Common myeloid progenitor, CD34-positive (primary cell): ENCODE measurements at regions of chr19 and their contacts with region 1.

Region 1: GRCh38 chr19:12938234-12939025 is at the start of gene CALR:
- DNase-seq: peak; percentile 100
- H3K4me3 ChIP-seq: peak within 1 kb of the TSS; percentile 94 to 100 (median 98)
- H3K27ac ChIP-seq: peak within 1 kb of the TSS; percentile 98 to 99
- H3K4me1 ChIP-seq: peaks cover 27 to 81% (median 65%) of the 10 kb centered on the region in 4 experiments
- H3K27me3 ChIP-seq: no peaks in the 10 kb centered on the region

Region 2: GRCh38 chr19:12838182-12838885 is 100.1 kb before region 1 on chr19 and contains the start of gene MAST1:
- CTCF ChIA-PET with region 1: no interaction called
- POLR2A ChIA-PET with region 1: no interaction called
- DNase-seq: peak; percentile 47 to 69 (median 60)
- H3K4me3 ChIP-seq: peak within 1 kb of the TSS in 5 of 7 experiments; percentile 31 to 72 (median 57)
- H3K27ac ChIP-seq: no peak within 1 kb of the TSS
- H3K4me1 ChIP-seq: peaks cover 2 to 38% (median 25%) of the 10 kb centered on the region in 4 experiments
- H3K27me3 ChIP-seq: peaks cover 17 to 92% (median 42%) of the 10 kb centered on the region in 5 experiments

Region 3: DNA sequence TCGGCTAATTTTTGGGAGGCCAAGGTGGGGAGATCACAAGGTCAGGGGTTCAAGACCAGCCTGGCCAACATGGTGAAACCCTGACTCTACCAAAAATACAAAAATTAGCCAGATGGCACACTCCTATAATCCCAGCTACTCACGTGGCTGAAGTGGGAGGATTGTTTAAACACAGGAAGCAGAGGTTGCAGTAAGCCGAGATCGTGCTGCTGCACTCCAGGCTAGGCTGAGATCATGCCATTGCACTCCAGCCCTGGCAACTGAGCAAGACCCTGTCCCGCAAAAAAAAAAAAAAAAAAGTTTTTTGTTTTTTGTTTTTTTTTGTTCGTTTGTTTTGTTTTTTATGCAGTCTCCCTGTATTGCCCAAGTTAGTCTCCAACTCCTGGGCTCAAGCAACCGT is 78.9 kb before region 1 on chr19:
- CTCF ChIA-PET with region 1: no interaction called
- POLR2A ChIA-PET with region 1: no interaction called
- DNase-seq: no peak
- H3K4me3 ChIP-seq: no peak overlapping the region
- H3K27ac ChIP-seq: no peak overlapping the region
- H3K4me1 ChIP-seq: no peaks in the 10 kb centered on the region
- H3K27me3 ChIP-seq: peaks cover 0 to 4% (median 0%) of the 10 kb centered on the region in 5 experiments

Region 4: GRCh38 chr19:12881172-12881808 is 57.1 kb before region 1 on chr19 and contains the start of gene DNASE2:
- CTCF ChIA-PET with region 1: interaction called, 20 read pairs
- POLR2A ChIA-PET with region 1: interaction called, 16 read pairs
- DNase-seq: peak; percentile 96 to 98 (median 97)
- H3K4me3 ChIP-seq: peak within 1 kb of the TSS; percentile 48 to 92 (median 82)
- H3K27ac ChIP-seq: peak within 1 kb of the TSS in 1 of 2 experiments; percentile 79
- H3K4me1 ChIP-seq: peaks cover 0 to 31% (median 28%) of the 10 kb centered on the region in 4 experiments
- H3K27me3 ChIP-seq: no peaks in the 10 kb centered on the region

Region 5: GRCh38 chr19:12890787-12891552 is 47.5 kb before region 1 on chr19 and contains the start of gene GCDH:
- CTCF ChIA-PET with region 1: interaction called, 12 read pairs
- POLR2A ChIA-PET with region 1: interaction called, 28 read pairs
- DNase-seq: peak; percentile 99 to 100 (median 99)
- H3K4me3 ChIP-seq: peak within 1 kb of the TSS; percentile 63 to 98 (median 90)
- H3K27ac ChIP-seq: peak within 1 kb of the TSS; percentile 50 to 79
- H3K4me1 ChIP-seq: peaks cover 4 to 26% (median 20%) of the 10 kb centered on the region in 4 experiments
- H3K27me3 ChIP-seq: no peaks in the 10 kb centered on the region